ENCODE measurements at regions of chr5 and their contacts with region 1.

Region 1: GRCh38 chr5:142611154-142611553 is 74.7 kb downstream of the FGF1 start:
- DNase-seq: peak; percentile 49 to 93
- H3K4me3 ChIP-seq: no peak overlapping the region
- H3K27ac ChIP-seq: no peak overlapping the region
- H3K4me1 ChIP-seq: no peaks in the 10 kb centered on the region
- H3K27me3 ChIP-seq: no peaks in the 10 kb centered on the region
- CTCF ChIP-seq: peak; percentile 78 to 94 (median 90)
- EP300 ChIP-seq: no peak
- POLR2A ChIP-seq: no peak
- RAD21 ChIP-seq: peak; percentile 92 to 94

Region 2: GRCh38 chr5:142597546-142598341 is 13.4 kb before region 1 on chr5:
- CTCF ChIA-PET with region 1: interaction called, 46 read pairs
- POLR2A ChIA-PET with region 1: no interaction called
- DNase-seq: no peak
- H3K4me3 ChIP-seq: no peak overlapping the region
- H3K27ac ChIP-seq: no peak overlapping the region
- H3K4me1 ChIP-seq: no peaks in the 10 kb centered on the region; a peak in 1 of 7 replicates
- H3K27me3 ChIP-seq: 0 out of 7 replicates have a peak, but pooled peaks cover 0 to 3% (median 0%) of the 10 kb centered on the region in 4 experiments
- CTCF ChIP-seq: no peak
- EP300 ChIP-seq: no peak
- POLR2A ChIP-seq: no peak
- RAD21 ChIP-seq: no peak

Region 3: GRCh38 chr5:142627383-142628255 is 16.5 kb after region 1 on chr5:
- CTCF ChIA-PET with region 1: interaction called, 24 read pairs
- POLR2A ChIA-PET with region 1: interaction called, 3 read pairs
- DNase-seq: no peak
- H3K4me3 ChIP-seq: no peak overlapping the region
- H3K27ac ChIP-seq: no peak overlapping the region
- H3K4me1 ChIP-seq: peaks cover 0 to 8% (median 0%) of the 10 kb centered on the region in 4 experiments; a peak in 2 of 7 replicates
- H3K27me3 ChIP-seq: no peaks in the 10 kb centered on the region
- CTCF ChIP-seq: no peak
- EP300 ChIP-seq: no peak
- POLR2A ChIP-seq: no peak
- RAD21 ChIP-seq: no peak

Region 4: DNA sequence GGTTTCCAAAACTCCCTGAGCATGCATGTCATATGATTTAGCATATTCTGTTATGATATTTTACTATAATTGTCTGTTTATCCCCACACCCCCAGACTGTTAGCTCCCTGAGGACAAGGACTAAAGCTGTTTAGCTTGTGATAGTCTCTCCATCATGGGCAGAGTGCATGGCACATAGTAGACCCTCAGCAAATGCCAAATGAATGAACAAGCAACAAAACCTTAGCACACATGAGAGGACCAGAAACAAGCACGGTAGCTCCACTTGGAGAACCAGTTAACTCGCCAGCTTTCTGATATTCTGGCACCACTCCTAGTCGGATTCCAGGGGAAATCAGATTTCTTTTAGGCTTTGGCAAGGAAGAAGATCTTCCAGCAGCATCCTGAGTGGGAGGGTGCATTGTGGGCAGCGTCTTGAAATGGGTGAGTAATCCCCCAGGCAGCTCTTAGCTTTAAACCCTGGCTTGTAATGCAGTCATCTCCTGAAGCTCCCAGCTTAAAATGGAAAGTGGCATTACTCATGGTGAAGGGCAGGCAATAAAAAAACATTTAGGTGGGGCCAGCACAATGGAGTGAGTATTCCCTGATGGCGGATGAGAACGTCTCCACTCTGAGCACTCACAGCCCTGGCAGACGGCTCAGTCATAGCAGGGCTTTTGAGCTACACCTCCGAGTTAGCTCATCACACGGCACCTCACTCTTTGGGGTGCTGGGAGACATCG is 33.6 kb after region 1 on chr5:
- CTCF ChIA-PET with region 1: interaction called, 38 read pairs
- POLR2A ChIA-PET with region 1: interaction called, 3 read pairs
- DNase-seq: no peak
- H3K4me3 ChIP-seq: no peak overlapping the region
- H3K27ac ChIP-seq: no peak overlapping the region
- H3K4me1 ChIP-seq: no peaks in the 10 kb centered on the region
- H3K27me3 ChIP-seq: no peaks in the 10 kb centered on the region
- CTCF ChIP-seq: no peak
- EP300 ChIP-seq: no peak
- POLR2A ChIP-seq: no peak
- RAD21 ChIP-seq: no peak

Region 5: DNA sequence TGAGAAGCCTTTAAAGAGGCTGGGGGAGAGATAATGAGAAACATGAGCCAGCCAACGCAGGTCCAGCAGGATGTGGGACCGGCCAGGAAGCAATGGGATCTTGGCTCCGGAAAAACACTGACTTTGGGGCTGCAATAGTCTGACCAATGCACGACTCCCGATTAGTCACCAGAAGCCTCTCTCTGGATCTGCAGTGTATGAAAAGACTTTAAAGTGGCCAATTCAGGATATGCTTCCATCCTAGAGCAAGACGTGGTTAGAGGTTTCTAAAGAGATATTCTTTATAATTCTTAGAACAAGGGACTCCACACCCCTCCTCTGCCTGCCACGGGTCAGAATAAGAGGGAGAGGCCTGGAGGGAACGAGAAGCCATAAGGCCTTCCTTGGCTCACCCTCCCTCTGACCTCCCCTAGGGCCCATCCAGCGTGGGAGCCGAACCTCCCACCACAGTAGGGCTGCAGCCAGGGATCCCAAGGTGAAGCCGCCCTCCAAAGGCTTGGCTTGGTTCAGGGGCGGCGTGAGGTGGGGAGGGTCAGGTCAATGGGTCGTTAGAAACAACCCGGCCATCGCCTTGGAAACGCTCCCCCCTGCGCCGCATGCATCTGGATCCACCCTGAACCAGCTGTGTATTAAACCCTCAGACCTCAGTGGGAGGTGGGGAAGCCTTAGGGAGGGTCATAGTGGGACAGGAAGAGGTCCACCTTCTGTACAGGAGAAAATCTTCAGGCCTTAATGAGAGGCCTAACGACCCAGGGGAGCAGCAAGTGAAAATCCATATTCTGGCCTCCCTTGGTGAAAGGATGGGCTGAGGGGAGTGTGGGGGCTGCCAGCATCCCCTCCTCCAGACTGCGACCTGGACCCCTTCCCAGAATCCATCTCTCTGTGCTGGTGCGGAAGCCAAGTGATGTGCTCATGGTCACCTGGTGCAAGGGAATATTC is 63.6 kb after region 1 on chr5:
- CTCF ChIA-PET with region 1: interaction called, 10 read pairs
- POLR2A ChIA-PET with region 1: no interaction called
- DNase-seq: no peak
- H3K4me3 ChIP-seq: no peak overlapping the region
- H3K27ac ChIP-seq: no peak overlapping the region
- H3K4me1 ChIP-seq: peaks cover 0 to 3% (median 0%) of the 10 kb centered on the region in 4 experiments; a peak in 1 of 7 replicates
- H3K27me3 ChIP-seq: no peaks in the 10 kb centered on the region; a peak in 2 of 7 replicates
- CTCF ChIP-seq: no peak
- EP300 ChIP-seq: no peak
- POLR2A ChIP-seq: no peak
- RAD21 ChIP-seq: no peak

Region 6: DNA sequence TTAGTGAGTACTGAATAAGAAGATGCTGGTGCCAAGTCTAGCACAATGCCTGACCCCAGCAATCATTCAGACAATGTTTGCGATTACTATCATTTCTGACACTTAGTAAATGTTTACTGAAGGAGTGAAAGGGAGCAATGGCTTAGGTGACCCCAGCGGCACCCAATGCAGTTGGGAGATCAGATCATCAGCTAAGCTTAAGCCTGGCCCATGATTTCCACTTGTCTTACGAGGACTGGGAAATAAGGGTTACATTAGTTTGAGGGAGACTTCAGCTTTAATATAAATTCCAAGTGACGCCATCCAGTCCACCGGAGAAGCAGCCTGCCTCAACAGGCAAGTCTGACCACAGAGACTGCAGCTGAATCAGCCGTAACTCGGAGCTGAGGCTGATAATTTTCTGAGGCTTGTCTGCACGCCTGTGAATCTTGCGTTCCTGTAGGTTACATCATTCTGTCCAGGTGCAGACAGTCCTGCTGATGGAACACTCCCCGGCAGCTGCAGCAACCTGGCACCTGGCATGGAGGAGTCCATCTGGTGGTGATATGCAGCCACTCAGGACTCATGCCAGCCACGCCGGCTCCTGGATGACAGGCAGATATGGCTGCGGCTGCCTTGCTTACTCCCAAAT is 109.6 kb after region 1 on chr5:
- CTCF ChIA-PET with region 1: interaction called, 12 read pairs
- POLR2A ChIA-PET with region 1: no interaction called
- DNase-seq: no peak
- H3K4me3 ChIP-seq: no peak overlapping the region
- H3K27ac ChIP-seq: no peak overlapping the region
- H3K4me1 ChIP-seq: peaks cover 2 to 16% (median 11%) of the 10 kb centered on the region in 4 experiments
- H3K27me3 ChIP-seq: no peaks in the 10 kb centered on the region; a peak in 1 of 7 replicates
- CTCF ChIP-seq: no peak
- EP300 ChIP-seq: no peak
- POLR2A ChIP-seq: no peak
- RAD21 ChIP-seq: no peak